ENCODE measurements at regions of chr9 and their contacts with region 1.

Region 1: GRCh38 chr9:98034593-98035546 is 21.7 kb upstream of the NANS start:
- DNase-seq: peak; percentile 96
- ATAC-seq: peak; percentile 99
- H3K4me3 Mint-ChIP-seq: peak overlapping the region; percentile 13
- H3K27ac Mint-ChIP-seq: no peak overlapping the region
- H3K4me1 Mint-ChIP-seq: peaks cover 13% of the 10 kb centered on the region
- H3K27me3 Mint-ChIP-seq: no peaks in the 10 kb centered on the region
- CTCF ChIP-seq: peak; percentile 69

Region 2: GRCh38 chr9:97930972-97931371 is 103.9 kb before region 1 on chr9:
- CTCF ChIA-PET with region 1: interaction called, 11 read pairs
- POLR2A ChIA-PET with region 1: no interaction called
- intact Hi-C with region 1: no loop called
- DNase-seq: no peak
- ATAC-seq: no peak
- H3K4me3 Mint-ChIP-seq: peak overlapping the region; percentile 48
- H3K27ac Mint-ChIP-seq: peak overlapping the region; percentile 90
- H3K4me1 Mint-ChIP-seq: peaks cover 40% of the 10 kb centered on the region
- H3K27me3 Mint-ChIP-seq: no peaks in the 10 kb centered on the region
- CTCF ChIP-seq: no peak

Region 3: DNA sequence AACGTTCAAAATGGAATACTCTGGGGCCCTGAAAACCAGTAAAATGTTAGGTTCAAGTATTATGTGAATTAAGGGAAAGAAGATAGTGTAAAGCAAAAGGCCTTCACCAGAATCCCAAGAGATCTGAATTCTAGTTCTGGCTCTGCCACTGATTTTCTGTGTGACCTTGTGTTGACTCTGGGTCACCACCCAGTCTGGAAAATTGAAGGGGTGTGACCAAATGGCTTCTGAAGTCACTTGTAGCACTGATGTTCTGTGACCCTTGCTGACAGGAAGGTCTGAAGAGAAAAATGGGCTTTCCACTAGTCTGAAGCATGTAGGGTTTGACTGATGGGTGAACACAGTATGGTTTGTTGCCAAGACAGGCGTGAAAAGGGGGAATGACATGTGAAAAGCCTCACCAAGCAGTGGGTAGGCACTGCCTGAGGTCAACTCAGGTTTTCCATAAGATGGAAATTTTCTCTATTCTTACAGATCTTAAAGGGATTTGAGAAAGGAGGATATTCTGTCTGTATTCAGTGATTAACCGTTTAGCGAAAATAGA is 18.7 kb before region 1 on chr9:
- CTCF ChIA-PET with region 1: interaction called, 21 read pairs
- POLR2A ChIA-PET with region 1: no interaction called
- intact Hi-C with region 1: no loop called
- DNase-seq: no peak
- ATAC-seq: no peak
- H3K4me3 Mint-ChIP-seq: no peak overlapping the region
- H3K27ac Mint-ChIP-seq: peak overlapping the region; percentile 18
- H3K4me1 Mint-ChIP-seq: peaks cover 2% of the 10 kb centered on the region
- H3K27me3 Mint-ChIP-seq: no peaks in the 10 kb centered on the region
- CTCF ChIP-seq: no peak

Region 4: GRCh38 chr9:98022447-98022846 is 12.4 kb before region 1 on chr9:
- CTCF ChIA-PET with region 1: interaction called, 21 read pairs
- POLR2A ChIA-PET with region 1: no interaction called
- intact Hi-C with region 1: no loop called
- DNase-seq: no peak
- ATAC-seq: no peak
- H3K4me3 Mint-ChIP-seq: no peak overlapping the region
- H3K27ac Mint-ChIP-seq: no peak overlapping the region
- H3K4me1 Mint-ChIP-seq: no peaks in the 10 kb centered on the region
- H3K27me3 Mint-ChIP-seq: no peaks in the 10 kb centered on the region
- CTCF ChIP-seq: no peak

Region 5: DNA sequence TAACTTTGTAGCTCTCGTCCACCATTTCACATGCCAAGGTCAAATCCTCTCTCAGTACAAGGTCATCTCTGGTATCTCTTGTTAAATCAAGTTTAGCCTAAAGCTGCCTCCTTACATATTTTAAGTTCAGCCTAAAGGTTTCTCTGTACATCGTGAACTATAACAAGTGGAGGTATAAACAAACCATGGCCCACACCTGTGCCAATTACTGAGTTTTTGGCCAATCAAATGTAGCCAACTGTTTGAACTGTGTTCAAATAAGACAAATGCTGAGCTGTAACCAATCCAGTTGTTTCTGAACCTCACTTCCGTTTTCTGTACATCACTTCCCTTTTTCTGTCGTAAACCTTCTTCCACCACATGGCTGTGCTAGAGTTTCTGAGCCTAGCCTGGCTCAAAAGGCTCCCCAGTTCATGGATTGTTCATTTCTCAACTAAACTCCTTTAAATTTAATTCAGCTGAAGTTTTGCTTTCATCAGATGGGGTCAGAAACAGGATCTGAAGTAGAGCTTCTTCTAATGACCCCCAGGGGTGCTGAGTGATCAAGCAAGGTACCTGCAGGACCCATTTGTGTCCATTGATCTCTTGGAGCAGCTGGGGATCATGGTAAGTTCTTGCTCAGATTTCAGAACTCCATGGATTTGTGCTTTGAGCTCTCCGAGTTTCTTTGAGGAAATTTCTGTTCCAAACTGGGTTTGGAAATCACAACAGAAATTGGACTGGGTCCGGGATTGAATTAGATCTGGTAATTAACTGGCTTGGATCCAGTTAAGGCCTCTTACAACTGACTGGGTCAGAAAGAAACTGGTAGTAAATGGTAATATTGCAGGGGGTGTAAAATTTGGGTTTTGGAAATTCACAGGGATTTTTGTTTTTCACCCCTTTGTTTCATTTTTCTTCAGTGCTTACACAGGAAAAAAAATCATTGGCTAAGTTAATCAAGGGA is 10.6 kb after region 1 on chr9:
- CTCF ChIA-PET with region 1: interaction called, 29 read pairs
- POLR2A ChIA-PET with region 1: no interaction called
- intact Hi-C with region 1: no loop called
- DNase-seq: peak; percentile 52
- ATAC-seq: peak; percentile 93
- H3K4me3 Mint-ChIP-seq: peak overlapping the region; percentile 86
- H3K27ac Mint-ChIP-seq: peak overlapping the region; percentile 94
- H3K4me1 Mint-ChIP-seq: peaks cover 36% of the 10 kb centered on the region
- H3K27me3 Mint-ChIP-seq: no peaks in the 10 kb centered on the region
- CTCF ChIP-seq: peak; percentile 35

Measured in activated CD8-positive, alpha-beta T cell treated with anti-CD3 and anti-CD28 coated beads for 36 hours (primary cell).